ENCODE measurements at regions of chr12 and their contacts with region 1.

Region 1: DNA sequence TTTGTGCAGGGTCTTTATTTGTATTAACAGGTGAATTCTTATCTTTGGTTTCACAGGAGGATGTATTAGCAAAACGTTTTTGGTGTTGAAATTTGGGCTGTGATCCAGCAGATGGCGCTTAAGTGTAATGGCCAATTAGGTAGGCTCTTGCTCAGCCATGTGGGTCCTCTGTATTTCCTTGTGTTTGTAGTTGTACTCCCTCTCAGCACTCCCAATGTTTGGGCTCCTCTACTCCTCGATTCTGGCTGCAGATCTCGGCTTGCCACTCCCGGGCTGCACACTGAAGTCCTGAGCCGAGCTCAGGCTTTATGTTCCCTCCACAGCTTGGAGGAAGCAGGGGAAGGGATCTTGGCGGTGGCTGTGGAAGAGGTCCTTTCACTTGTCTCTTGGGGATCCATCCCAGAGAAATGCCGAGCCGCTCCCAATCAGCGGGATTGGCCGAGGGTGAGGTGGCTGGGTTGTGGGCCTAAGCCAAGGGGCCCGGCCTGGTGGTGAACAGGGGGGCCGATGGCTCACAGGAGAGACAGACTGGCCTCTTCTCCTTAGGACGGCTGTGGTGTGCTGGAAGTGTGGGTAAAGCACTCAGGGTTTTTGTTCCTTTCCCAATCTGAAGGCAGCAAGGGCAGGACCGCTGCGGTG is 133.7 kb downstream of the AEBP2 start:
- DNase-seq: peak; percentile 69
- H3K4me3 ChIP-seq: no peak overlapping the region
- H3K27ac ChIP-seq: peak overlapping the region; percentile 98
- H3K4me1 ChIP-seq: peaks cover 48% of the 10 kb centered on the region
- H3K27me3 ChIP-seq: no peaks in the 10 kb centered on the region
- CTCF ChIP-seq: peak; percentile 45 to 60
- POLR2A ChIP-seq: no peak

Region 2: GRCh38 chr12:18935371-18935965 is 637.6 kb before region 1 on chr12:
- CTCF ChIA-PET with region 1: no interaction called
- POLR2A ChIA-PET with region 1: no interaction called
- dilution Hi-C with region 1: no loop called
- intact Hi-C with region 1: no loop called
- DNase-seq: no peak
- H3K4me3 ChIP-seq: no peak overlapping the region
- H3K27ac ChIP-seq: no peak overlapping the region
- H3K4me1 ChIP-seq: no peaks in the 10 kb centered on the region
- H3K27me3 ChIP-seq: no peaks in the 10 kb centered on the region
- CTCF ChIP-seq: no peak
- POLR2A ChIP-seq: no peak

Region 3: DNA sequence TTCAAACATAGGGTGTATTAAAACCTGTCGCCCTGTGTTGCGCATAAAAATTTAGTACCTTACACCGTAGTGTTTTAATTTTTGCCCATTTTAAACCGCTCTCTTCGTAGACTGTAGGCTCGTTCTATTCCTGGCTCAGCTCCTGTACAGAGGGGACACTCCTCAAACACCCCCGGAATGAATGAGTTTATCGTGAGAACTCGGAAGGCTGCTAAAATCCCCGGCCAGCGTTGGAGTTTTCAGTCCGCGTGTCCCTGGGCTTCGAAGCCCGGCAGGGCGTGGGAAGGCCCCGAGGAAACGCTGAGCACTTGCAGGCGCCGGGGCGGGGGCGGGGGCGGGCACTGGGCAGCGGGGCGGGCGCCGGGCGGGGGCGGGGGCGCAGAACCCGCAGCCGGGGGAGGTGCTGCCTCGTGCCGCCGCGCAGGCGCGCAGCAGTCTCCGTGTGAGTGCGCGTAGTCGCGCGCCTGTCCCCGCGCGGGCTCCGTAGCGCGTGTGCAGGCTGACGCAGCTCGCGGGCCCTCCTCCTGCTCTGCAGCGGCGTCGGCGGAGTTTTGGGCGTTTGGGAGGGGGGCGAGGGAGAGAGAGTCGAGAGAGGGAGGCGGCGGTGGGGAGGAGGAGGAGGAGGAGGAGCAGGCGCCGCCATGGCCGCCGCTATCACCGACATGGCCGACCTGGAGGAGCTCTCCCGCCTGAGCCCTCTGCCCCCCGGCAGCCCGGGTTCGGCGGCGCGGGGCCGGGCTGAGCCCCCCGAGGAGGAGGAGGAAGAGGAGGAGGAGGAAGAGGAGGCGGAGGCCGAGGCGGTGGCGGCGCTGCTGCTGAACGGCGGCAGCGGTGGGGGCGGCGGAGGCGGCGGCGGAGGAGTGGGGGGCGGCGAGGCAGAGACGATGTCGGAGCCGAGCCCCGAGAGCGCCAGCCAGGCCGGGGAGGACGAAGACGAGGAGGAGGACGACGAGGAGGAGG is 133.7 kb before region 1 on chr12 and contains the start of gene AEBP2:
- CTCF ChIA-PET with region 1: no interaction called
- POLR2A ChIA-PET with region 1: no interaction called
- dilution Hi-C with region 1: no loop called
- intact Hi-C with region 1: loop called (anchors 5 kb)
- DNase-seq: peak; percentile 94
- H3K4me3 ChIP-seq: peak within 1 kb of the TSS; percentile 90 to 97 (median 97)
- H3K27ac ChIP-seq: peak within 1 kb of the TSS; percentile 74
- H3K4me1 ChIP-seq: peaks cover 13% of the 10 kb centered on the region
- H3K27me3 ChIP-seq: peaks cover 0 to 6% of the 10 kb centered on the region in 2 experiments
- CTCF ChIP-seq: no peak
- POLR2A ChIP-seq: peak; percentile 12
- total RNA-seq, gene AEBP2: 42.2 and 45.1 TPM in 2 replicates

Region 4: GRCh38 chr12:19546611-19547162 is 26.4 kb before region 1 on chr12:
- CTCF ChIA-PET with region 1: interaction called, 13 read pairs
- POLR2A ChIA-PET with region 1: interaction called, 4 read pairs
- dilution Hi-C with region 1: no loop called
- intact Hi-C with region 1: loop called (anchors 1 kb)
- DNase-seq: peak; percentile 92
- H3K4me3 ChIP-seq: peak overlapping the region in 1 of 3 experiments; percentile 22
- H3K27ac ChIP-seq: peak overlapping the region; percentile 84
- H3K4me1 ChIP-seq: peaks cover 23% of the 10 kb centered on the region
- H3K27me3 ChIP-seq: no peaks in the 10 kb centered on the region
- CTCF ChIP-seq: no peak
- POLR2A ChIP-seq: no peak

Region 5: GRCh38 chr12:19694627-19695026 is 121.6 kb after region 1 on chr12:
- CTCF ChIA-PET with region 1: interaction called, 6 read pairs
- POLR2A ChIA-PET with region 1: no interaction called
- dilution Hi-C with region 1: no loop called
- intact Hi-C with region 1: loop called (anchors 1 kb)
- DNase-seq: no peak
- H3K4me3 ChIP-seq: no peak overlapping the region
- H3K27ac ChIP-seq: peak overlapping the region; percentile 58
- H3K4me1 ChIP-seq: peaks cover 20% of the 10 kb centered on the region
- H3K27me3 ChIP-seq: no peaks in the 10 kb centered on the region
- CTCF ChIP-seq: no peak
- POLR2A ChIP-seq: no peak

Region 6: GRCh38 chr12:19800884-19801283 is 227.8 kb after region 1 on chr12:
- CTCF ChIA-PET with region 1: no interaction called
- POLR2A ChIA-PET with region 1: no interaction called
- dilution Hi-C with region 1: no loop called
- intact Hi-C with region 1: loop called (anchors 10 kb)
- DNase-seq: peak; percentile 91
- H3K4me3 ChIP-seq: no peak overlapping the region
- H3K27ac ChIP-seq: peak overlapping the region; percentile 71
- H3K4me1 ChIP-seq: peaks cover 25% of the 10 kb centered on the region
- H3K27me3 ChIP-seq: no peaks in the 10 kb centered on the region
- CTCF ChIP-seq: no peak
- POLR2A ChIP-seq: no peak

Region 7: DNA sequence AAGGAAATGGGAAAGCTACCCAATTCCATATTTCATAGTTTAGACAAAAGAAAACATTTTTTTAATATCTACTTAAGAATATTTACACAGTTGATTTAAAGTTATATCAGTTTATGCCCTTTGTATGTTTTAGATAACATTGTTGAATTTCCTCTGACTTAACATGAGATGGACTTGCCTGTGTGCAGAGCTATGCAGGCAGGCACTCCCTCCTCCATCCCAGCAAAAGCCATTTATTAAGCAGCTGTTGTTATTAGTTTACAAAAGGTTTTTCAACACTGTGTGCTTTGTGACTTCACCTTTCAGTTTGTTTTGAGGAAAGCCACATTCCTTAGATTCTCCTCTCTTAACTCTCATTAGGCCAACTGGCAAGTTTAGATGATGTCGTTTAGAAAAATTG is 457.8 kb after region 1 on chr12:
- CTCF ChIA-PET with region 1: no interaction called
- POLR2A ChIA-PET with region 1: no interaction called
- dilution Hi-C with region 1: no loop called
- intact Hi-C with region 1: loop called (anchors 5 kb)
- DNase-seq: peak; percentile 96
- H3K4me3 ChIP-seq: no peak overlapping the region
- H3K27ac ChIP-seq: peak overlapping the region; percentile 91
- H3K4me1 ChIP-seq: peaks cover 31% of the 10 kb centered on the region
- H3K27me3 ChIP-seq: no peaks in the 10 kb centered on the region
- CTCF ChIP-seq: no peak
- POLR2A ChIP-seq: peak; percentile 56

Region 8: DNA sequence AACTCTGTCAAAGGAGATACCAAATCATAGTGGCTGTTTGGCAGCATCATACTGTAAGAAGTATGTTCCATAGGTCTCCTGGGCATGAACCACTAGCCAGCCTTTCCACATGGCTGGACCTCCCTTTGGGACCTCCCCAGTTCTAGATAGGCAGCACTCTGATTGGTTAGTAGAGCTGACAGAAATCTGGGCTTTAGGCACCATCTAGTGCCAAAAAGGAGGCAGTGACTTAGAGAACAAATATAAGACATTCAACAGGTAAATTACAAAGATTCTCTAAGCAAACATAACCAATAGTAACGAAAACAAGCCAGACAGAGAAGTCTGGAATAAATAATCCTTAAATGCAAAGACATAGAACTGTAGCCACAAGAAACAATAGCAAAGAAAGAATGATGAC is 647.3 kb after region 1 on chr12:
- CTCF ChIA-PET with region 1: interaction called, 5 read pairs
- POLR2A ChIA-PET with region 1: no interaction called
- dilution Hi-C with region 1: no loop called
- intact Hi-C with region 1: loop called (anchors 2 kb)
- DNase-seq: peak; percentile 61
- H3K4me3 ChIP-seq: no peak overlapping the region
- H3K27ac ChIP-seq: no peak overlapping the region
- H3K4me1 ChIP-seq: no peaks in the 10 kb centered on the region
- H3K27me3 ChIP-seq: no peaks in the 10 kb centered on the region
- CTCF ChIP-seq: peak; percentile 26 to 30
- POLR2A ChIP-seq: no peak

Measured in endothelial cell of umbilical vein (primary cell).